ENCODE measurements at regions of chr4 and their contacts with region 1.

Region 1: DNA sequence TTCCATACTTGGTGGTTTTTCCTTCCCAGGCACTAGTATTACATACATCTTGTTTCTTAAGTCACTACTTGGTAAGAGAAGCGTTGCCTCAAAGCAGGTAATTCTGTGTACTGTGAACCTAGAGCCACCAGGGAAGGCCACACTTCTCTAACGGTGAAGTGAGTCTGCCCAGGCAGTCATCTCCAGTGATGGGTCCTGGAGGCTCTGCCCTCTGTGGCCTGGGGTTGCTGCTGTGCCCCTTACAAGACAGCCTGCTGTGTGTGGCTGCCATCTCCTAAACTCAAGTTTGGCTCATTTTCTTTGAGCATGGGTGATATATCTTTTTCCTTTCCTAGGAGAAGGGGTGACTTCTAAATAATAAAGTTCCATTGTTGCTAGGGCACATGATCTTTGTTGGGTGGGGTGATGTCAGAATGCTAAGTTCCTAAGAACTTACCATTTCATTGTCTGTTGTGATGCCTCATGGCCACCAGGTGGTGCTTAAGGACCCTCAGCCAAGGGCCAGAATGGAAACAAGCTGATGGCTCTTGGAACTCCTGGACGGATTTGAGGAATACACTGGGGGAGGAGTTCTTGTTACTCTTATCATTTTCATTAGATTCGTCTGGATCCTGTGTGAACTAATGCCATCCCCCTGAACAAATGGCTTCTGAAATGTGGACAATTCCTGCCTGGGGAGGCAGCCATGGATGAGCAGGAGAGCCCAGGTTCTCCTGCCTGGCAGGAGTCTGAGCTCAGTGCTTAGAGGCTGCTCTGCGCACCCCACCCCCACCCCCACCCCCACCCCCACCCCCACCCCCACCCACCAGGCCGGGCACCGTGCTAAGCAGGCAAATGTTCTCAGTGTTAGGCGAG is 41.1 kb upstream of the WDR1 start:
- DNase-seq: peak; percentile 65
- H3K4me3 Mint-ChIP-seq: no peak overlapping the region
- H3K27ac Mint-ChIP-seq: no peak overlapping the region
- H3K4me1 Mint-ChIP-seq: peaks cover 48% of the 10 kb centered on the region
- H3K27me3 Mint-ChIP-seq: no peaks in the 10 kb centered on the region

Region 2: GRCh38 chr4:9691238-9692065 is 466.3 kb before region 1 on chr4:
- CTCF ChIA-PET with region 1: no interaction called
- intact Hi-C with region 1: loop called (anchors 10 kb)
- DNase-seq: peak; percentile 93
- H3K4me3 Mint-ChIP-seq: peak overlapping the region; percentile 82
- H3K27ac Mint-ChIP-seq: peak overlapping the region; percentile 77
- H3K4me1 Mint-ChIP-seq: peaks cover 24% of the 10 kb centered on the region
- H3K27me3 Mint-ChIP-seq: no peaks in the 10 kb centered on the region

Region 3: DNA sequence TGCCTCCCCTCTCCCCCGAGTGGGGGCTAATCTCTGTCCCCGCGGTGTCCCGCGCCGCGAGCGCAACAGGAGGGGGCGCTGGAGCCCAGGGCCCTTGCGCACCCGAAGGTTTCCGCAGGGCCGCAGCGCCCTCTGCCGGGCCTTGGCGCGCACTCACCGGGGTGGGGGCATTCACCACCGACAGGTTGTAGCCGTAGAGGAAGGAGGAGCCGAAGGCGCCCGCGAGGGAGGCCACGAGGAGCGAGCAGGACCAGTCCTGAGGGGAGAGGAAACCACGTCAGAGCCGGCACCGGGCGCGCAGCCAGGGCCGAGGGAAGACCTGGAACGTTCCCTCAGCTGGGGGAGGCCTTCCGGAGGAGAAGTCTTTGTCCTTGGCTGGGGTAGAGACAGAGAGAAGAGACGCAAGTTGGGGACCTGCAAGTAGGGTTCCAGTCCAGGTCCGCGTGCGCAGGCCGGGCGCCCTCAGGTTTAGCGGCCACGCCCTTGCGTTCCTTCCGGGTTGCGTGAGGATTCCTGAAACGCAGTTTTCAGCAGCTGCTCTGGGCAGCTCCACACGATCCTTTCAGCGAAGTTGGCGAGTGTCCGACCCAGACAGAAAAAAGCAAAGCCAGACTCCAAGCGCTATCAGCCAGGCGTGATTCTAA is 138.8 kb before region 1 on chr4:
- CTCF ChIA-PET with region 1: no interaction called
- intact Hi-C with region 1: loop called (anchors 1 kb)
- DNase-seq: peak; percentile 96
- H3K4me3 Mint-ChIP-seq: peak overlapping the region; percentile 85
- H3K27ac Mint-ChIP-seq: peak overlapping the region; percentile 84
- H3K4me1 Mint-ChIP-seq: peaks cover 5% of the 10 kb centered on the region
- H3K27me3 Mint-ChIP-seq: no peaks in the 10 kb centered on the region

Region 4: DNA sequence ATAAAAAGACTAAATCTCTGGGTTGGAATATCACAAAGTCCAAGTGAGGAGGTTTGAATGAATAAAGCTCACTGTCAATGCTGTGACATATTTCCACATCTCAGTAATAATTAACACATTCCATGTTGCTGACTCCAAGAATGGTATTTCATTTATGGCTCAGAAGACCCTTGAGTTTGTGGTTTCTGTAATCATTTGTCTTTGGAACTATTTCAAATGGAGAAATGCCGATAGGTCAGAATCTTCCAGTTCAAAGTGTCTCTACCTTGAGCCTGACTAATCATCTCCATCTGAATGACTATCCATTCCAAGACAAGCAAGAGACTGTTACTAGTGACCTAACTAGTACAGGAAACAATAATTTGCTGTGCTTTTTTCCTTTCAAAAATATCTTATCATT is 112.2 kb before region 1 on chr4:
- CTCF ChIA-PET with region 1: no interaction called
- intact Hi-C with region 1: no loop called
- DNase-seq: no peak
- H3K4me3 Mint-ChIP-seq: no peak overlapping the region
- H3K27ac Mint-ChIP-seq: no peak overlapping the region
- H3K4me1 Mint-ChIP-seq: no peaks in the 10 kb centered on the region
- H3K27me3 Mint-ChIP-seq: no peaks in the 10 kb centered on the region

Region 5: DNA sequence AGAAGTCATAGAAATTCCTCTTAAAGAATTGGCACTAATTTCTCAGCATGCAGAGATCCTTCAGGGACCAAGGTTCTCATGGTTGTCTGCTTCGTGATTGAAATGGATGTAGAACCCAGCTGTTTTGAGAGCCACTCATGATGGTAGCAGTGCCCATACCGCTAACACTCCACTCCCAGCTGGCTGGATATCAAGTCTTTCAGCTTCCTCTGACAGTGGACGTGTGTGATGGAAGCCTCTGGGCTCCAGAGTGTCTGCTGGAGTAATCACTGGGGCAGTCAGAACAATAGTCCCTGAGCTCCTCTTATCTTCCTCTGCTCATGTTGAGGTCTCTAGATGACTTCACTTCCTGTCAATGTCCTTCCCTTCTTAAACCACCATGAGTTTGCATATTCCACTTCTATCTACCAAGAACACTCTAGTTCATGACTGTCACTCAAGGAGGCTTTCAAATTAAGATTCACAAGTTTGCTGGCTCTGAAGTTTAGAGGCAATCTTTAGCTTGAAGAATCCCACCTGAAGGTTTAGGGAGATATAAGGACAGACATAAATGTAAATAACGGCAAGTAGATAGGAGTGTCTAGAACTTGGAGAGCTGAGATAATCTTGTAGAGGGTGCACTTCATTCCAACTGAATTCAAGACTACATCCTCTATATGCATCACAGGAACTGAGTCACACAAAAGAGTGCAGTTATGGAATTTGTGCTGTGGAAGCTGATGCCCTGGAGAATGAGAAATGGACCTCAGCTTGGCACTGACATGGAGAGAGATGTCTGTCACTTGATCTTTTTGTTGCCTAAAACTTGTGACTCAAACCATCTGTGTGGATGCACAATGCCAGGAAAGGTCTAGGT is 23.4 kb after region 1 on chr4:
- CTCF ChIA-PET with region 1: interaction called, 5 read pairs
- intact Hi-C with region 1: loop called (anchors 1 kb)
- DNase-seq: peak; percentile 68
- H3K4me3 Mint-ChIP-seq: no peak overlapping the region
- H3K27ac Mint-ChIP-seq: peak overlapping the region; percentile 85
- H3K4me1 Mint-ChIP-seq: peaks cover 32% of the 10 kb centered on the region
- H3K27me3 Mint-ChIP-seq: no peaks in the 10 kb centered on the region

Region 6: GRCh38 chr4:10461091-10461849 is 303.6 kb after region 1 on chr4:
- CTCF ChIA-PET with region 1: interaction called, 6 read pairs
- intact Hi-C with region 1: loop called (anchors 1 kb)
- DNase-seq: peak; percentile 65
- H3K4me3 Mint-ChIP-seq: peak overlapping the region; percentile 76
- H3K27ac Mint-ChIP-seq: no peak overlapping the region
- H3K4me1 Mint-ChIP-seq: peaks cover 25% of the 10 kb centered on the region
- H3K27me3 Mint-ChIP-seq: peaks cover 32% of the 10 kb centered on the region

Region 7: GRCh38 chr4:10535912-10536311 is 378.2 kb after region 1 on chr4:
- CTCF ChIA-PET with region 1: interaction called, 44 read pairs
- intact Hi-C with region 1: loop called (anchors 1 kb)
- DNase-seq: no peak
- H3K4me3 Mint-ChIP-seq: no peak overlapping the region
- H3K27ac Mint-ChIP-seq: no peak overlapping the region
- H3K4me1 Mint-ChIP-seq: no peaks in the 10 kb centered on the region
- H3K27me3 Mint-ChIP-seq: no peaks in the 10 kb centered on the region

Region 8: DNA sequence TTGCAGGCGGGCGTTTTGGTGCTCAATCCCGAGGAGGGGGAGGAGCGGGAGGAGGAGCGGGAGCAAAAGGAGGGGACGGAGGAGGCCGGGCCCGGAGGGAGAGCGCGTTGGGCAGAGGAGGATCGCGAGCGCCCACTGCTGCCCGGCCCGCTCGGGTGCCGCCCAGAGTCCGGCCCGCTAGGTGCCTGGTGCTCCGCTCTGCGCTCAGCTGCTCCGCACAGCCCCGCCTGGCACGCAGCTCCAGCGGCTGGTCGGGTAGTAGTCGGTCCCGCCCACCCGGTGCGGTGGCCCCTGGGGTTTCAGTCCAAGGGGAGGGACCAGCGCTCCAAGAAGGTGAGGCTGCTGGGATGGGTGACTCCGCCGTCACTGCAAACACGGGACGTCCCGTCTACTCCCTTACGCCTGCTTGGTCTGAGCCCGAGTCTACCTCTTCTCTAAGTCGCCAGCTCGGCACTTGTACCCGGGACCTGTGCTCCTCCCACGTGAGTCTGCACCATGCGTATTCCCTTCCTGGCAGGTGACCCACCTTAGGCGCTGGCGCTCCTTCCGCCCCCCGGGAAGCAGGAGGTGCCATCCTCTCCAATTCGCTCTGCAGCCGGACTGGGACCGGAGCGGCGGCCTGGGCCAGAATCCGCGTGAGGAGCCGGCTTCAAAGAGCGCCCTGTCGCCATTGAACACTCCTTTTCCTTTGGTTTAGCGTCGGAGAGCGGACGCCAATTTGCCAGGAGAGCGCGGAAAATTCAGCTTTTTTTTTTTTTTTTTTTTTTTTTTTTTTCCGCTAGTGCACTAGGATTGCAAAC is 1271.4 kb after region 1 on chr4:
- CTCF ChIA-PET with region 1: no interaction called
- intact Hi-C with region 1: loop called (anchors 10 kb)
- DNase-seq: peak; percentile 64
- H3K4me3 Mint-ChIP-seq: peak overlapping the region; percentile 63
- H3K27ac Mint-ChIP-seq: no peak overlapping the region
- H3K4me1 Mint-ChIP-seq: peaks cover 14% of the 10 kb centered on the region
- H3K27me3 Mint-ChIP-seq: peaks cover 31% of the 10 kb centered on the region

Measured in activated naive CD4-positive, alpha-beta T cell treated with anti-CD3 and anti-CD28 coated beads for 36 hours (primary cell).